ENCODE measurements at regions of chr7 and their contacts with region 1.

Region 1: GRCh38 chr7:55415173-55415778 is 50.1 kb downstream of the LANCL2 start:
- DNase-seq: no peak
- H3K4me3 ChIP-seq: no peak overlapping the region
- H3K27ac ChIP-seq: no peak overlapping the region
- H3K4me1 ChIP-seq: no peaks in the 10 kb centered on the region
- H3K27me3 ChIP-seq: no peaks in the 10 kb centered on the region
- CTCF ChIP-seq: peak; percentile 72 to 80 (median 78)
- POLR2A ChIP-seq: no peak

Region 2: DNA sequence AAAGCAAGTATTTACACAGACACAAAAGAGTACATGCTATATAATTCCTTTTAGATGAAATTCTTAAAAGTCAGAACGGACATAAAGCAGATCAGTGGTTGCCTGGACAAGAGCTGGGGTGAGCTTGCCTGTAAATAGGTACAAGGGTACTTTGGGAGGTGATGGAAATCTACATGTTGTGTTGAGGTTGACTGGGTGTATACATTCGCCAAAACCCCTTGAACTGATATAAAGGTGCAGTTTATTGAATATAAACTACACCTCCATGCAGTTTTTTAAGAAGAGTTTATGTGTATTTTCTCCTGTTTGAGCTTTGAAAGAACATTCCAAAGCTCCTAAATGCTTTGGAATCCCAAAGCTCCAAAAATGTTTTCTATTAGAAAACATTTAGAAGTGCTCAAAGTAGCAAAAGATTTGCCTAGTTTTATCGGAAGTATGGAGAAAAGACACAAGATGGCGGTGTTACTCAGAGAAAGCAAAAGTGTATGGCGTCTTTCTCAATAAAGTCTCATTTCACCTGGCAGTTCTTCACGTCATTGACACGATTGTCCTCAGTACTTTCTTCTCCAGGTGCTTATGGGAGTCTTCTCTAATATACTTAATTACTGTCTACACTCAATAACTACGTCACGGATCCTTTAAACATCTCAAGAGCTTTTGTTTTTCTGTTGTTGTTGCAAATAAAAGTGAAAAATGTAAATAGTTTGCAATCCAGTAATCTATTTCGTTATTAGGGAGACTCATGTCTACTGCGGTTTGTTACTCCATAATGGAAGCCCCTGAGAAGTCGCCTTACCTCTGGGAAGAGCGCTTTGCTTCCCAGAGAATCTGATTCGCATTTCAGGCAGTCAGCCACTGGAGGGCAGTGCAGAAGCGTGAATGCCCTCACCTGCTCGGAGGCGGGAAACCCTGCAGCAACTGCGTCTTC is 641.5 kb before region 1 on chr7:
- intact Hi-C with region 1: loop called (anchors 10 kb)
- DNase-seq: no peak
- H3K4me3 ChIP-seq: peak overlapping the region in 1 of 2 donors; percentile 29
- H3K27ac ChIP-seq: no peak overlapping the region
- H3K4me1 ChIP-seq: no peaks in the 10 kb centered on the region
- H3K27me3 ChIP-seq: no peaks in the 10 kb centered on the region
- CTCF ChIP-seq: peak; percentile 44 to 83 (median 73)
- POLR2A ChIP-seq: no peak

Region 3: DNA sequence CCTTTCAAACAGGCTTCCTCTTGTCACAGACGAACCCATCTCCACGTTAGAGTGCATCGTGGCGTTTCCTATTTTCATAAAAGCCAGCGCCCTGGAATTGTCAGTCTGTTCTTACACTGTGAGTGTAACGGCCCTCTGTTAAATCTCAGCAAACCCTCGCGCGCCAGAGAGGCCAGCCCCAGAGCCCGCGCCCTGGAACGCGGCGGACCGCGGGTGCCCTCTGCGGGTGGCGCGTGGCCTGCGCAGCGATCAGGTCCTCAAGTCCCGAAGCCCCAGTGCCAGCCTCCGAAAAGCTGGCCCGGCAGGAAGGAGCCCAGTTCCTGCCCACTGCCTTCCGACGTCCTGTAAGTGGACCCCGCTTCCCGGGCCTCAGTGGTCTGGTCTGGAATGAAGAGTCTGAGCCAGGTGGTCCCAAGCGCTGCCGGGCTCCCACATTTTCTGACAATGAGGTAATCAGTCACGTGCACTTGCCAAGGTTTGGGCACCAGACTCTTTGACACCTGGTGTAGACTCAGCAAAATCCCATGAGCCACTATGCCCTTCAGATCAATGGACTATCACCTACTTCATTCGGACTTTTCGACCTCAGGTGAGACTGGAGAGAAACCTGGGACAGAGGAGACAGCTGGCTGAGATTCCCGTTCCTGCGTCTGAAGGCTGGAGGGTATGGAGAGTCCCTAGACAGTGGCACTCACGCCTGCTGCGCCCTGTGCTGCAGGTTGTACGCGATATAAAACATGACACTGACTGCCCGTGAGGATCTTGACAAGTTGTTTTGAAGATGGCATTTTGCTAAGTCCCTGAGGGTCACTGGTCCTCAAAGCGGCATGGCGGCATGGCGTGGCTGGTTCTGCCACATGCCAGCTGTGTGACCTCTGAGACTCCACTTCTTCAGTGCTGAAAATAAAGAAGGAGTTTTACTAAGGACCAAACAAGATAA is 159.5 kb before region 1 on chr7:
- intact Hi-C with region 1: no loop called
- DNase-seq: no peak
- H3K4me3 ChIP-seq: peak overlapping the region; percentile 57
- H3K27ac ChIP-seq: peak overlapping the region; percentile 78
- H3K4me1 ChIP-seq: peaks cover 10% of the 10 kb centered on the region
- H3K27me3 ChIP-seq: no peaks in the 10 kb centered on the region
- CTCF ChIP-seq: peak; percentile 79 to 92 (median 84)
- POLR2A ChIP-seq: no peak

Region 4: GRCh38 chr7:55280031-55280454 is 135.2 kb before region 1 on chr7:
- intact Hi-C with region 1: loop called (anchors 2 kb)
- DNase-seq: no peak
- H3K4me3 ChIP-seq: no peak overlapping the region
- H3K27ac ChIP-seq: no peak overlapping the region
- H3K4me1 ChIP-seq: no peaks in the 10 kb centered on the region
- H3K27me3 ChIP-seq: no peaks in the 10 kb centered on the region
- CTCF ChIP-seq: peak; percentile 40 to 71 (median 65)
- POLR2A ChIP-seq: no peak

Region 5: DNA sequence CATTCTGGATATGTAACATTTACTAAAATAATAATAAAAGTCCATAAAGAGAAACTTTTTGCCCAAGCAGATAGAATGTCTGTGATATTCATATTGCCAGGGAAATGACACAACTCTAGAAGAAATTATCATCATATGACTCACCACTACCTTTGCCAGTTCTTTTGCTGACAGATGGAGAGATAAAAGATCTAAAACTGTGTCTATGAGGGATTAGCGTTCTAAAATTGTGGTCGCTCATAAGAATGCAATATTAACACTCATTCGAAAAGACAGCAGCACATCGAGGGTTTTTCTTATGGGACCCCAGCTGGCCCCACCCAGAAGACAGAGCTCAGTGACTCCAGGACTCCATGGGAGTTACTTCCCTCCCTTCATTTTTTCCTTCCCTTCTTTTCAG is 66.8 kb before region 1 on chr7:
- intact Hi-C with region 1: no loop called
- DNase-seq: no peak
- H3K4me3 ChIP-seq: no peak overlapping the region
- H3K27ac ChIP-seq: no peak overlapping the region
- H3K4me1 ChIP-seq: peaks cover 7% of the 10 kb centered on the region
- H3K27me3 ChIP-seq: no peaks in the 10 kb centered on the region
- CTCF ChIP-seq: no peak
- POLR2A ChIP-seq: no peak